ENCODE measurements at regions of chr18 and their contacts with region 1.

Region 1: DNA sequence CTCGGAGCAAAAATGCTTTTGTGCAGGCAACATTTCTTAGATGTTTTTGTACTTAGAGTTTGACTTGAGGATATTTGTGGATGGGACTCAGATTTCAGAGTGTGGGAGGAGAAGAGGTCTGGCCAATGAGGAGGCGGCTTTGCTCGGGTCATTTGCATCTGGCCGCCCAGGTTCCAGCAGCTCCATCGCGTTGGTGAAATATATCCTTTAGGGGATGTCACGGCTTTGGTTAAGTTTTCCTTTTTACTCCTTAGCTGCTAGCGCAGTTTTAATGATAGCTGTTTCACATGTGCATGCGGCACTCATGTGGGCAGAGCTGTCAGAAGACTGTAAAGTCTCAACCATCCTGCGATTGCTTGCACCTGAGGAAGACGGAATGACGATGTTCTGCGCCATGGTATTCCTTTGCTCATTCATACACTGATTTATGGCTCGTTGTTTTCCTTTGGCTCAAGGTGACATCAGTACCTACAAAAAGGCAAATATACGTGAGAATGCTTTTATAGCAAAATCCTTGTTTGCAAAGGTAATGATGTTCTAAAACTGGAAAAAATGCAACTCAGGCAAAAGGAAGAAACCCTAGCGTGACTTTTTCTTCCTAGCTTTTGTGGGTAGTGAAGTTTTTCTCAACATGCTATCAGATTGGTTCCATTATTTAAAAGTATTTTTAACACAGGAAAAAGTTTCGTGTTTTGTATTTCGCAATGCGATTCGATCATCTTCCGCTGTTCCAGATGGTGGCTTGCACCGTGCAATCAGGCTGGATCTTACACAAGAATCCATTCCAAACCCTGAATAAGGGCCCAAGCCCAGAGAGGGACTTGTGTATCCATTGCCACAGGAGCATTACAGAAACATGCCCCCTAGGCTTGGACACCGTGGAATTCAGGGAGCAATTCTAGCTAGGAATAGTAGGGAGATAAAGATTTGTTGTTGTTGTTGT is 70.5 kb upstream of the ZNF516 start:
- DNase-seq: no peak
- H3K4me3 ChIP-seq: peak overlapping the region; percentile 9 to 57 (median 36)
- H3K27ac ChIP-seq: peak overlapping the region; percentile 80 to 87 (median 86)
- H3K4me1 ChIP-seq: peaks cover 9 to 37% (median 22%) of the 10 kb centered on the region in 3 donors
- H3K27me3 ChIP-seq: no peaks in the 10 kb centered on the region
- CTCF ChIP-seq: no peak
- POLR2A ChIP-seq: peak in 1 of 4 donors; percentile 32

Region 2: DNA sequence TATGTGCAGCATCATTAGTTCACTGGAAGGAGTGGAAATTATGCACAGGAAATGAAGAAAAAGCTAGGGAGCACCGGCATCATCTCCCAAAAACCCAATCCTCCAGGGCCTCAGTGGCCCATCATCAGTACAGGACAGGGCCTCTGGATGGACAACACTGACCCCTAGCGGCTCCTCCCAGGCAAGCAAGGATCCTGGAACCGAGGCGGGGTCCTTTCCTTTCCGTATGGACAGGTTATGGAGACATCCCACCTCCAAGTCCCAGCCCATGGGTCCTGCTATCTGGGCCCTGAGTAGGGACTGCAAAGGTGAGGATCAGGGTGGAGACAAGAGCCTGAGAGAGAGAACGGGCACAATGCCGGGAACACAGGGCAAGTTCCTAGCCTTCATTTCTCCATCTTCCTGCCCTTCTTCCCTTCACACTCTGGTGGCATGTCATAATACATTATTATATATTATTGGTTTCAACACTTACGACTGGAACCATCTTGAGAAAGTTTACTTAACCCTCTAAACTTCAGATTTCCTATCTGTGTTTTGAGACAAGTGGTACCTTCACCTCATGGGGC is 138.7 kb before region 1 on chr18:
- intact Hi-C with region 1: no loop called
- DNase-seq: no peak
- H3K4me3 ChIP-seq: no peak overlapping the region
- H3K27ac ChIP-seq: no peak overlapping the region
- H3K4me1 ChIP-seq: peaks cover 12 to 62% (median 19%) of the 10 kb centered on the region in 3 donors
- H3K27me3 ChIP-seq: no peaks in the 10 kb centered on the region
- CTCF ChIP-seq: peak in 5 of 6 experiments; percentile 26 to 58 (median 32)
- POLR2A ChIP-seq: no peak

Region 3: DNA sequence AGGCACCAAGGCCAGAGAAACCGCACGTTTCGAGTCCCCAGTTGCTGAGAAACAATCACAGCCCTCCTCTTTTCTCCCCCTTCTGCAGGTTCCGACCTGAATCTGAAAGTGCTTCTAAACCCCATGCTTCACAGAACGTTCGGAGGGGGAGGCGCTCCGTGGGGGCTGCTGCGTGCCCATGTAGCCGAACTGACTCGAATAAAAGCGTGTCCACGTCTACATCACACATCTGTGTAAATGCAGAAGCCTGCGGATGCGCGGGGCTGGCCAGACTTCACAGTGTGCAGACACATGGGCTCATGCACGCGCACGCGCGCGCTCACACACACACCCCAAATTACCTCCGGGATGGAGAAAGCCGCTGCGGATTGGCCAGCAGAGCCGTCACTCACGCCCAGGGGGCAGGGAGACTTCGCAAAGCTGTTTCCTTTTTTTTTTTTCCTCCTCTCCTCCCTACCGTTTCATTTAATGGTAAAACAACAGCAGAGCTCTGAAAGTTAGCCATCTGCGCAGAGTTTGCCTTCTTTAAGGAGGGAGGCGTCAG is 72.8 kb before region 1 on chr18:
- intact Hi-C with region 1: loop called (anchors 10 kb)
- DNase-seq: peak; percentile 87
- H3K4me3 ChIP-seq: peak overlapping the region; percentile 65 to 89 (median 71)
- H3K27ac ChIP-seq: peak overlapping the region; percentile 90 to 97 (median 94)
- H3K4me1 ChIP-seq: peaks cover 9 to 69% (median 20%) of the 10 kb centered on the region in 3 donors
- H3K27me3 ChIP-seq: peaks cover 0 to 7% (median 0%) of the 10 kb centered on the region in 4 donors
- CTCF ChIP-seq: no peak
- POLR2A ChIP-seq: peak in 2 of 4 donors; percentile 54 to 73